ENCODE measurements at regions of chr17 and their contacts with region 1.

Region 1: DNA sequence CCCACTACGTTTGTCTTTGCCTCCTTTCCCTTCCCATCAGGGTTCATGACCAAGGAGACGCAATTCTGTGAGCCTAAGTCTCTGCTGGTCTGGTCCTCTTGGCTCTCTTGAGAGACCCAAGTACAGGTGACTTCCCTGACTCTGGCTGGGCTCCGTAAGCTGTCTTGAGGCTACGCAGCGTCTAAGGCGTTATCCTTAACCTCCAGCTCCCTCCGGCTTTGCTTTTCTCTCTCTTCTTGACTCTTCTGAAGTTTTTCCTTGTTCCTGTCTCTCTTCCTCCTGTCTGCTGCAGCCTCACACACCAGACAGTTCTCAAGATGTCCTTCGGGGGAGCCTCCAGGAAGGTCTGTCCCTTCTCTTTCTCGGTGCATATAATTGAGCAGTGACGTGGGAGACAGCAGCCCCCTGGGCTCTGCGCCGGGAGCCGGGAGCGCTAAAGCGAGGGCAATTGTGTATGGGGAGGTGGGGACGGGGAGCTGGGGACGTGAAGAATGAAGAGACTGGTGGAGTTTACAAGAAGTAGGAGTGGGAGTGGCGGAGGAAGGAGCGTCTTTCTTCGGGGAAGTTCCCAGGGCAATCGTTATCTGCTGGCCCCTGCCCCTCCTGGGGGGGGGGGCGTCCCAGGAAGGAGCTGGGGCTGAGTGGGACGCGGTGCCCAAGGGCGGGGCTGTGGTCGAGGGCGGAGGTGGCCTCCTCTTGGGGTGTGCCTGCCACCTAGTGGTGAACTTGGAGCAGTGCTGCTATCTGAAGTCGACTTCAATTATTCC is 6.9 kb upstream of the PIRT start:
- DNase-seq: peak; percentile 76 to 79 (median 79)
- ATAC-seq: peak; percentile 97 to 98 (median 98)
- H3K4me3 ChIP-seq: peak overlapping the region; percentile 14 to 53 (median 47)
- H3K27ac ChIP-seq: no peak overlapping the region
- H3K4me1 ChIP-seq: peaks cover 0 to 3% (median 0%) of the 10 kb centered on the region in 4 donors
- H3K27me3 ChIP-seq: no peaks in the 10 kb centered on the region
- CTCF ChIP-seq: peak; percentile 89 to 98 (median 94)
- POLR2A ChIP-seq: no peak

Region 2: GRCh38 chr17:10652984-10653659 is 191.7 kb before region 1 on chr17:
- intact Hi-C with region 1: loop called in 1 of 2 experiments (anchors 10 kb)
- DNase-seq: no peak
- ATAC-seq: no peak
- H3K4me3 ChIP-seq: no peak overlapping the region
- H3K27ac ChIP-seq: no peak overlapping the region
- H3K4me1 ChIP-seq: no peaks in the 10 kb centered on the region
- H3K27me3 ChIP-seq: no peaks in the 10 kb centered on the region
- CTCF ChIP-seq: no peak
- POLR2A ChIP-seq: no peak

Region 3: DNA sequence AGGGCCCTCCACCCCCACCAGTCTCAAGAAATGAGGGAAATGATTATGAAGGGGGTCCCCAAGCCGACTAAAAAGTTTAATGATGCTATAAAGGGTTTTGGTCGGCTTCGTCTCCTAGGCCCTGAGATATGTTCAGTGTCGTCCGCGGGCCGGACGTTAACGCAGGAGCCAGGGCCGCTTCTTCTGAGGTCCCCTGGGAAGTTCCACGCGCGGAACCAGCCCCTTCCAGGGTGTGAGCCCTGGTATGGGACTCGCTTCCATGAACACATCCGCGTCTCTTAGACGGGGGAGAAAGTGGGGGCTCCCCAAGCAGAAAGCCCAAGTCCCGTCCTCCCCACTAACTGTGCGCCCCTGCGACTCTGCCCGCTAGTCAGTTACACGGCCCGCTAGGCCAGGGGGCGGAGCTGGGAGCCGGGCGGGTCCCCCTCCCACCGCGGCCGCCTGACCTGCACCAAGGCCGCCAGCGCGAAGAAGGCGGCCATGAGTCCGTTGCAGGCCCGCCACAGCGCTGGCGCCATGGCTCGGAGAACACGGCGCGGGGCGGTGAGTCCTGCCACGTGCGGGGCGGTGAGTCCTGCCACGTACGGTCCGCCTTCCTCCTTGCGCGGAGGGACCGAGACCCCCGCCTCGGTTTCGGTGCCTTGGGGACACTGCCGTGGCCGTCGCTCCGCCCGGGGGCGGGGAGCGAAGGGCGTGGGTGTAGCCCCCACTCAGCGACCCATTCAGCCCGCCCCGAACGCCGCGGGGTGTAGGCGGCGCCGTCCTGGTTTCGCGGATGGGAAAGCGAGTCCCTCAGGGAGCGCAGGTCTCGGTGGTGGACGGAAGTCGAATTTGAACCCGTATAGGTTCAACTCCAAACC is 115.2 kb before region 1 on chr17 and contains the start of gene TMEM220:
- intact Hi-C with region 1: loop called in 1 of 2 experiments (anchors 10 kb)
- DNase-seq: peak; percentile 86 to 90 (median 90)
- ATAC-seq: peak; percentile 83 to 93 (median 88)
- H3K4me3 ChIP-seq: peak within 1 kb of the TSS; percentile 74 to 76 (median 75)
- H3K27ac ChIP-seq: peak within 1 kb of the TSS; percentile 94 to 99 (median 99)
- H3K4me1 ChIP-seq: peaks cover 0 to 32% (median 14%) of the 10 kb centered on the region in 4 donors
- H3K27me3 ChIP-seq: no peaks in the 10 kb centered on the region
- CTCF ChIP-seq: no peak
- POLR2A ChIP-seq: peak; percentile 97
- total RNA-seq, gene TMEM220: 26.6 to 61.0 (median 43.2) TPM

Region 4: GRCh38 chr17:10743316-10744009 is 101.3 kb before region 1 on chr17:
- intact Hi-C with region 1: loop called (anchors 10 kb)
- DNase-seq: no peak
- ATAC-seq: peak in 3 of 4 donors; percentile 36 to 69 (median 36)
- H3K4me3 ChIP-seq: no peak overlapping the region
- H3K27ac ChIP-seq: no peak overlapping the region
- H3K4me1 ChIP-seq: peaks cover 0 to 7% (median under 1%) of the 10 kb centered on the region in 4 donors
- H3K27me3 ChIP-seq: no peaks in the 10 kb centered on the region
- CTCF ChIP-seq: no peak
- POLR2A ChIP-seq: no peak